ENCODE measurements at regions of chr20 and their contacts with region 1.

Region 1: GRCh38 chr20:13546497-13547131 is 92.1 kb downstream of the TASP1 start:
- DNase-seq: peak; percentile 51 to 83
- ATAC-seq: peak; percentile 80 to 94
- H3K4me3 ChIP-seq: no peak overlapping the region
- H3K27ac ChIP-seq: peak overlapping the region; percentile 34 to 63; a peak in 4 of 6 replicates
- H3K4me1 ChIP-seq: peaks cover 9% of the 10 kb centered on the region; the same call in 2 of the 3 replicates
- CTCF ChIP-seq: peak; percentile 98
- EP300 ChIP-seq: no peak
- POLR2A ChIP-seq: no peak
- RAD21 ChIP-seq: peak; percentile 97 to 98

Region 2: GRCh38 chr20:13119583-13119982 is 427.0 kb before region 1 on chr20:
- CTCF ChIA-PET with region 1: interaction called, 118 read pairs
- POLR2A ChIA-PET with region 1: no interaction called
- DNase-seq: peak; percentile 29 to 70
- ATAC-seq: peak; percentile 86 to 97
- H3K4me3 ChIP-seq: no peak overlapping the region
- H3K27ac ChIP-seq: no peak overlapping the region
- H3K4me1 ChIP-seq: no peaks in the 10 kb centered on the region
- CTCF ChIP-seq: peak; percentile 94
- EP300 ChIP-seq: no peak
- POLR2A ChIP-seq: no peak
- RAD21 ChIP-seq: peak; percentile 95 to 98

Region 3: GRCh38 chr20:13325033-13325432 is 221.6 kb before region 1 on chr20:
- CTCF ChIA-PET with region 1: interaction called, 98 read pairs
- POLR2A ChIA-PET with region 1: no interaction called
- DNase-seq: peak; percentile 33 to 75
- ATAC-seq: peak; percentile 94 to 97
- H3K4me3 ChIP-seq: no peak overlapping the region
- H3K27ac ChIP-seq: peak overlapping the region; percentile 28 to 42; a peak in 4 of 6 replicates
- H3K4me1 ChIP-seq: peaks cover 12% of the 10 kb centered on the region
- CTCF ChIP-seq: peak; percentile 74
- EP300 ChIP-seq: no peak
- POLR2A ChIP-seq: no peak
- RAD21 ChIP-seq: peak; percentile 91 to 94

Region 4: GRCh38 chr20:13355411-13355810 is 191.2 kb before region 1 on chr20:
- CTCF ChIA-PET with region 1: interaction called, 10 read pairs
- POLR2A ChIA-PET with region 1: no interaction called
- DNase-seq: no peak
- ATAC-seq: no peak
- H3K4me3 ChIP-seq: no peak overlapping the region
- H3K27ac ChIP-seq: no peak overlapping the region
- H3K4me1 ChIP-seq: no peaks in the 10 kb centered on the region; the same call in 1 of the 3 replicates
- CTCF ChIP-seq: no peak
- EP300 ChIP-seq: no peak
- POLR2A ChIP-seq: no peak
- RAD21 ChIP-seq: no peak

Region 5: GRCh38 chr20:13525225-13525940 is 21.2 kb before region 1 on chr20:
- CTCF ChIA-PET with region 1: interaction called, 41 read pairs
- POLR2A ChIA-PET with region 1: interaction called, 3 read pairs
- DNase-seq: peak; percentile 83 to 87
- ATAC-seq: peak; percentile 96 to 99
- H3K4me3 ChIP-seq: 0 out of 3 replicates have a peak overlapping the region, but pooled peaks have one; percentile 4
- H3K27ac ChIP-seq: peak overlapping the region; percentile 66 to 81
- H3K4me1 ChIP-seq: peaks cover 22% of the 10 kb centered on the region
- CTCF ChIP-seq: no peak
- EP300 ChIP-seq: no peak
- POLR2A ChIP-seq: no peak
- RAD21 ChIP-seq: peak in 1 of 2 experiments; percentile 27; a peak in 1 of 5 replicates

Region 6: DNA sequence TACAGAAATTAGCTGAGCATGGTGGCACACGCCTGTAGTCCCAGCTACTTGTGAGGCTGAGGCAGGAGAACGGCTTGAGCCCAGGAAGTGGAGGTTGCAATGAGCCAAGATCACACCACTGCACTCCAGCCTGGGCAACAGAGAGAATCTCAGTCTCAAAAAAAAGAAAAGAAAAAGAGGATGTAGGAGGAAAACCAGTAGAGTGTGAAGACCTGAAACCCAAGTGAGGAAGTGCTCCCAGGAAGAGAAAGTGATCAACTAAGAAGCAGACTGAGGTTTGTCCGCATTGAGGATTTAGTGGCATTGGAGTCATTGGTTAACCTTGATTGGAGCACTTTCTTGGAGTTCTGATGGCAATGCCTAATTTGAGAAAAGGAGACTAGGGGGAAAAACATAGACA is 112.7 kb after region 1 on chr20:
- CTCF ChIA-PET with region 1: no interaction called
- POLR2A ChIA-PET with region 1: no interaction called
- DNase-seq: no peak
- ATAC-seq: no peak
- H3K4me3 ChIP-seq: no peak overlapping the region
- H3K27ac ChIP-seq: no peak overlapping the region
- H3K4me1 ChIP-seq: no peaks in the 10 kb centered on the region
- CTCF ChIP-seq: no peak
- EP300 ChIP-seq: no peak
- POLR2A ChIP-seq: no peak
- RAD21 ChIP-seq: no peak

Region 7: GRCh38 chr20:13671916-13672378 is 125.3 kb after region 1 on chr20:
- CTCF ChIA-PET with region 1: no interaction called
- POLR2A ChIA-PET with region 1: no interaction called
- DNase-seq: no peak
- ATAC-seq: no peak
- H3K4me3 ChIP-seq: no peak overlapping the region
- H3K27ac ChIP-seq: no peak overlapping the region
- H3K4me1 ChIP-seq: peaks cover 7% of the 10 kb centered on the region; the same call in 2 of the 3 replicates
- CTCF ChIP-seq: no peak
- EP300 ChIP-seq: no peak
- POLR2A ChIP-seq: no peak
- RAD21 ChIP-seq: no peak